Panc1 (cell line): ENCODE measurements at regions of chr7 and their contacts with region 1.

Region 1: DNA sequence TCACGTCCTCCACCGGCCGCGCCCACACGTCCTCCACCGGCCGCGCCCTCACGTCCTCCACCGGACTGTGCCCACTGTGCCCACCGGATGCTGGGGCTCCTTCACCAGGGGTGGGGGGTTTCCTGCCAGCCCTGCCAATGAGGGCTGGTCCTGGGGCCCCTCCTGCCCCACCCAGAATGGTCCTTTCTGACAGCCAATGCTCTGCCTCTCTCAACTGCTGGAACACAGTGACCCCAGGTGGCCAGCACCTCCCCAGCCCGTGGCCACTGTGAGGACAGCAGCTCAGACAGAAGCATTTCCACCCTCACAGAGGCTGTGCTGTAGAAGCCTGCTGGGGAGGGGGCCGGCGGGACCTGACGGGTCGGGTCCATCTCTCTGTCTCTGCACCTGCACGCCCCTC is 90.1 kb upstream of the DNAAF5 start:
- DNase-seq: peak; percentile 61
- ATAC-seq: peak; percentile 96
- H3K4me3 ChIP-seq: peak overlapping the region; percentile 42 to 44
- H3K27ac ChIP-seq: peak overlapping the region; percentile 62
- H3K4me1 ChIP-seq: peaks cover 12% of the 10 kb centered on the region
- H3K27me3 ChIP-seq: no peaks in the 10 kb centered on the region
- CTCF ChIP-seq: no peak; the same call in 1 of the 2 replicates

Region 2: GRCh38 chr7:332646-333392 is 303.6 kb before region 1 on chr7:
- CTCF ChIA-PET with region 1: no interaction called
- POLR2A ChIA-PET with region 1: no interaction called
- in situ Hi-C with region 1: no loop called
- intact Hi-C with region 1: loop called (anchors 5 kb)
- DNase-seq: no peak
- ATAC-seq: peak; percentile 98
- H3K4me3 ChIP-seq: peak overlapping the region; percentile 29 to 45
- H3K27ac ChIP-seq: no peak overlapping the region
- H3K4me1 ChIP-seq: no peaks in the 10 kb centered on the region; the same call in 1 of the 2 replicates
- H3K27me3 ChIP-seq: no peaks in the 10 kb centered on the region
- CTCF ChIP-seq: peak; percentile 96

Region 3: DNA sequence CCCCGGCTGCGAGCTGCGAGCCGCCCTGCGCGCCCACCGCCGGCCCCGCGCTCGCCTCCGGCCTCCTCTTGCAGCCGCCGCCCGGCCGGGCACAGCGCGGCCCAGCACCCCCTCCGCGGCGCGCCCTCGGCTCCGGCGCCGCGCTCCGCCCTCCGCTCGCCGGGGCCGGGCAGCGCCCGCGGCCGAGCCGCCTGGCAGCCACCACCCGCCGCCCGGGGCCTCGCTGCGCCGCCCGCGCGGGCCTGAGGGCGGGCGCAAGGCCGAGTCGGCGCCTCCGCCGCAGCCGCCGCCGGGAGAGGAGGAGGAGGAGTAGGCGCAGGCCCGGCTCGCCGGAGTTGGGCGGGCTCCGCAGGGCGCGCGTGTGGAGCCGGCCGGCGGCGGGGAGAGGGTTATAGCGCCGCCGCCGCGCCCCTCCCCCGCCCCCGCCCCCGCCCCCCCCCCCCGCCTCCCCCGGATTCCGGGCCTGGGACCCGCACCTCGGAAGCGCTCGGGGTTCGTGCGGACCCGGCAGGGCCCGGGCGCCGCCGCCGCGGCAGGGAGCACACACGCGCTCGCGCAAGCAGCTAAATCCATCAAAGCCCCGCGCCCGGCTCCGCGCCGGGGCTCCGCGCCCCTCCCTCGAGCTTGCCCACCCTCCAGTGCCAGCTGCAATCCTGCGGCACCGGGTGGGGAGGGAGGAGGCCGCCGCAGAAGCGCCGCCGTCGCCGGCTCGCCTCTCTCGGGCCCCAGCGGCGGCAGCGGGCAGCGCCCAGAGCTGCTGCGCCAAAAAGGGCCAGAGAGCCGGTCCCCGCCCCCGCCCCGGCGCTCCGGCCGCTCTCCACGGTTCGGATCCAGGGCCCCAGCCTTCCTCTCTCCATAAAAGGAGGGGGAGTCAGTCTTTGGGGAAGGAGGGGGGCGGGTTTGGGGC is 116.7 kb before region 1 on chr7 and contains the start of gene PDGFA:
- CTCF ChIA-PET with region 1: interaction called, 3 read pairs
- POLR2A ChIA-PET with region 1: no interaction called
- in situ Hi-C with region 1: no loop called
- intact Hi-C with region 1: loop called (anchors 10 kb)
- DNase-seq: no peak
- ATAC-seq: peak; percentile 66
- H3K4me3 ChIP-seq: peak within 1 kb of the TSS; percentile 67 to 81
- H3K27ac ChIP-seq: peak within 1 kb of the TSS; percentile 66
- H3K4me1 ChIP-seq: peaks cover 18% of the 10 kb centered on the region
- H3K27me3 ChIP-seq: no peaks in the 10 kb centered on the region; the same call in 1 of the 2 replicates
- CTCF ChIP-seq: no peak
- total RNA-seq, gene PDGFA: 18.5 TPM

Region 4: GRCh38 chr7:699061-699807 is 62.8 kb after region 1 on chr7:
- CTCF ChIA-PET with region 1: no interaction called
- POLR2A ChIA-PET with region 1: no interaction called
- in situ Hi-C with region 1: no loop called
- intact Hi-C with region 1: no loop called
- DNase-seq: no peak
- ATAC-seq: no peak
- H3K4me3 ChIP-seq: no peak overlapping the region
- H3K27ac ChIP-seq: no peak overlapping the region
- H3K4me1 ChIP-seq: no peaks in the 10 kb centered on the region
- H3K27me3 ChIP-seq: no peaks in the 10 kb centered on the region
- CTCF ChIP-seq: no peak